Activated B cell treated with CpG ODN at 0.5 μM for 24 hours (primary cell): ENCODE measurements at regions of chr15 and their contacts with region 1.

Region 1: GRCh38 chr15:40906091-40906990 is 12.1 kb downstream of the VPS18 start:
- DNase-seq: peak; percentile 90
- ATAC-seq: peak; percentile 80
- H3K4me3 Mint-ChIP-seq: peak overlapping the region; percentile 82
- H3K27ac Mint-ChIP-seq: peak overlapping the region; percentile 87
- H3K4me1 Mint-ChIP-seq: peaks cover 52% of the 10 kb centered on the region
- H3K27me3 Mint-ChIP-seq: no peaks in the 10 kb centered on the region
- CTCF ChIP-seq: peak; percentile 46

Region 2: GRCh38 chr15:40857601-40858341 is 48.6 kb before region 1 on chr15:
- CTCF ChIA-PET with region 1: interaction called, 54 read pairs
- POLR2A ChIA-PET with region 1: no interaction called
- intact Hi-C with region 1: no loop called
- DNase-seq: peak; percentile 80
- ATAC-seq: peak; percentile 98
- H3K4me3 Mint-ChIP-seq: no peak overlapping the region
- H3K27ac Mint-ChIP-seq: no peak overlapping the region
- H3K4me1 Mint-ChIP-seq: peaks cover 8% of the 10 kb centered on the region
- H3K27me3 Mint-ChIP-seq: no peaks in the 10 kb centered on the region
- CTCF ChIP-seq: no peak

Region 3: GRCh38 chr15:40941528-40942336 is 35.4 kb after region 1 on chr15:
- CTCF ChIA-PET with region 1: interaction called, 36 read pairs
- POLR2A ChIA-PET with region 1: interaction called, 15 read pairs
- intact Hi-C with region 1: loop called (anchors 1 kb)
- DNase-seq: peak; percentile 78
- ATAC-seq: peak; percentile 81
- H3K4me3 Mint-ChIP-seq: peak overlapping the region; percentile 73
- H3K27ac Mint-ChIP-seq: peak overlapping the region; percentile 35
- H3K4me1 Mint-ChIP-seq: peaks cover 34% of the 10 kb centered on the region
- H3K27me3 Mint-ChIP-seq: peaks cover 4% of the 10 kb centered on the region
- CTCF ChIP-seq: no peak

Region 4: DNA sequence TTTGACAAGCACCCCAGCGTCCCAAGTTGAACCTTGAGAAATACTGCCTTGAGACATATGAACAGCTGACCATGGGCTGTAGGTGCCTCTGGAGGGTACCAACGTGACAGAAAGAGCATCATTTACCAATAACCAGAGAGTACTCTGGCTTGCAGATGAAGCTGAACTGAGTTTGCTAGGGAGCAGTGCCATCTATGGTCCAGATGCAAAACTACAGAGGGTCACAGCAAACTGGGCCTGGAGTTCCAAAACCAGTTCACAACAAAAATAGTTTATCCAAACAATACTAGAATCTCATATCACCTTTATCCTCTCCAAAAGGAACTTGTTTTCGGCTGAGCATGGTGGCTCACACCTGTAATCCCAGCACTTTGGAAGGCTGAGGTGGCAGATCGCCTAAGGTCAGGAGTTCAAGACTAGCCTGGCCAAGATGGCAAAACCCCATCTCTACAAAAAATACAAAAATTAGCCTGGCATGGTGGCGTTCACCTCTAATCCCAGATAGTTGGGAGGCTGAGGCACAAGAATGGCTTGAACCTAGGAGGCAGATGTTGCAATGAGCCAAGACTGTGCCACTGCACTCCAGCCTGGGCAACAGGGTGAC is 116.2 kb after region 1 on chr15:
- CTCF ChIA-PET with region 1: interaction called, 86 read pairs
- POLR2A ChIA-PET with region 1: interaction called, 3 read pairs
- intact Hi-C with region 1: loop called (anchors 1 kb)
- DNase-seq: no peak
- ATAC-seq: peak; percentile 66
- H3K4me3 Mint-ChIP-seq: no peak overlapping the region
- H3K27ac Mint-ChIP-seq: no peak overlapping the region
- H3K4me1 Mint-ChIP-seq: no peaks in the 10 kb centered on the region
- H3K27me3 Mint-ChIP-seq: no peaks in the 10 kb centered on the region
- CTCF ChIP-seq: no peak

Region 5: GRCh38 chr15:41230650-41231533 is 324.6 kb after region 1 on chr15 and contains the starts of genes CHP1 and EXD1:
- CTCF ChIA-PET with region 1: interaction called, 5 read pairs
- POLR2A ChIA-PET with region 1: no interaction called
- intact Hi-C with region 1: loop called (anchors 1 kb)
- DNase-seq: peak; percentile 93
- ATAC-seq: peak; percentile 98
- H3K4me3 Mint-ChIP-seq: peak within 1 kb of the TSS; percentile 91
- H3K27ac Mint-ChIP-seq: peak within 1 kb of the TSS; percentile 81
- H3K4me1 Mint-ChIP-seq: peaks cover 28% of the 10 kb centered on the region
- H3K27me3 Mint-ChIP-seq: no peaks in the 10 kb centered on the region
- CTCF ChIP-seq: peak; percentile 99
- total RNA-seq, gene CHP1: 47.9 and 58.5 TPM in 2 replicates
- total RNA-seq, gene EXD1: not detected in 2 replicates

Region 6: GRCh38 chr15:41660235-41661077 is 754.1 kb after region 1 on chr15 and contains the start of gene MGA:
- CTCF ChIA-PET with region 1: no interaction called
- POLR2A ChIA-PET with region 1: no interaction called
- intact Hi-C with region 1: loop called (anchors 10 kb)
- DNase-seq: peak; percentile 92
- ATAC-seq: peak; percentile 84
- H3K4me3 Mint-ChIP-seq: peak within 1 kb of the TSS; percentile 91
- H3K27ac Mint-ChIP-seq: peak within 1 kb of the TSS; percentile 91
- H3K4me1 Mint-ChIP-seq: peaks cover 51% of the 10 kb centered on the region
- H3K27me3 Mint-ChIP-seq: peaks cover 2% of the 10 kb centered on the region
- CTCF ChIP-seq: no peak
- total RNA-seq, gene MGA: 49.9 and 58.3 TPM in 2 replicates